Activated naive CD4-positive, alpha-beta T cell treated with anti-CD3 and anti-CD28 coated beads for 36 hours (primary cell): ENCODE measurements at regions of chr12 and their contacts with region 1.

Region 1: GRCh38 chr12:120249875-120250795 is 15.4 kb downstream of the PXN start:
- DNase-seq: peak; percentile 69
- H3K4me3 Mint-ChIP-seq: peak overlapping the region; percentile 41
- H3K27ac Mint-ChIP-seq: peak overlapping the region; percentile 84
- H3K4me1 Mint-ChIP-seq: peaks cover 80% of the 10 kb centered on the region
- H3K27me3 Mint-ChIP-seq: no peaks in the 10 kb centered on the region

Region 2: DNA sequence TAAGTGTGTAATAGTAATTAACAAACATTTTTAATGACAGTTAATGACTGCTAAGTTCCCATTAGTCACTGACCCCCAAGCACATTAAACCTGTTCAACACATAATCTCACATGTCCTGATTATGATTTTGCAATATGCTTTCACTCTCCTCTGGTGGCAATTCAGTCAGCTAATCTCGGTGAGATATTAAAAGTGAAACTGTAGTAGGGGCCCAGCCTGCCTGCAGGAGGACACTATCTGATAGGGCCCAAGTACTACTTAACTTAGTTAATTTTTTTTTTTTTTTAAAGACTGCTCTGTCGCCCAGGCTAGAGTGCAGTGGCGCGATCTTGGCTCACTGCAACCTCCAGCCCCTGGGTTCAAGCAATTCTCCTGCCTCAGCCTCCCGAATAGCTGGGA is 421.8 kb before region 1 on chr12:
- CTCF ChIA-PET with region 1: no interaction called
- intact Hi-C with region 1: no loop called
- DNase-seq: no peak
- H3K4me3 Mint-ChIP-seq: no peak overlapping the region
- H3K27ac Mint-ChIP-seq: no peak overlapping the region
- H3K4me1 Mint-ChIP-seq: no peaks in the 10 kb centered on the region
- H3K27me3 Mint-ChIP-seq: no peaks in the 10 kb centered on the region

Region 3: GRCh38 chr12:120292661-120293531 is 42.8 kb after region 1 on chr12 and contains the start of gene RNU4-1:
- CTCF ChIA-PET with region 1: interaction called, 3 read pairs
- intact Hi-C with region 1: loop called (anchors 1 kb)
- DNase-seq: peak; percentile 88
- H3K4me3 Mint-ChIP-seq: no peak within 1 kb of the TSS
- H3K27ac Mint-ChIP-seq: no peak within 1 kb of the TSS
- H3K4me1 Mint-ChIP-seq: peaks cover 6% of the 10 kb centered on the region
- H3K27me3 Mint-ChIP-seq: no peaks in the 10 kb centered on the region
- total RNA-seq, gene RNU4-1: 685 to 1,294 TPM